Natural killer cell (primary cell): ENCODE measurements at regions of chr11 and their contacts with region 1.

Region 1: GRCh38 chr11:47523468-47524225 is 29.3 kb downstream of the CELF1 start:
- DNase-seq: peak in 1 of 2 donors; percentile 81
- ATAC-seq: peak; percentile 75 to 81 (median 79)
- H3K4me3 ChIP-seq: no peak overlapping the region
- H3K4me3 Mint-ChIP-seq: peak overlapping the region; percentile 1
- H3K27ac ChIP-seq: peak overlapping the region; percentile 42
- H3K27ac Mint-ChIP-seq: peak overlapping the region; percentile 89 to 93
- H3K4me1 ChIP-seq: peaks cover 26% of the 10 kb centered on the region
- H3K4me1 Mint-ChIP-seq: peaks cover 48 to 58% of the 10 kb centered on the region in 2 donors
- H3K27me3 ChIP-seq: no peaks in the 10 kb centered on the region
- H3K27me3 Mint-ChIP-seq: no peaks in the 10 kb centered on the region
- CTCF ChIP-seq: no peak

Region 2: DNA sequence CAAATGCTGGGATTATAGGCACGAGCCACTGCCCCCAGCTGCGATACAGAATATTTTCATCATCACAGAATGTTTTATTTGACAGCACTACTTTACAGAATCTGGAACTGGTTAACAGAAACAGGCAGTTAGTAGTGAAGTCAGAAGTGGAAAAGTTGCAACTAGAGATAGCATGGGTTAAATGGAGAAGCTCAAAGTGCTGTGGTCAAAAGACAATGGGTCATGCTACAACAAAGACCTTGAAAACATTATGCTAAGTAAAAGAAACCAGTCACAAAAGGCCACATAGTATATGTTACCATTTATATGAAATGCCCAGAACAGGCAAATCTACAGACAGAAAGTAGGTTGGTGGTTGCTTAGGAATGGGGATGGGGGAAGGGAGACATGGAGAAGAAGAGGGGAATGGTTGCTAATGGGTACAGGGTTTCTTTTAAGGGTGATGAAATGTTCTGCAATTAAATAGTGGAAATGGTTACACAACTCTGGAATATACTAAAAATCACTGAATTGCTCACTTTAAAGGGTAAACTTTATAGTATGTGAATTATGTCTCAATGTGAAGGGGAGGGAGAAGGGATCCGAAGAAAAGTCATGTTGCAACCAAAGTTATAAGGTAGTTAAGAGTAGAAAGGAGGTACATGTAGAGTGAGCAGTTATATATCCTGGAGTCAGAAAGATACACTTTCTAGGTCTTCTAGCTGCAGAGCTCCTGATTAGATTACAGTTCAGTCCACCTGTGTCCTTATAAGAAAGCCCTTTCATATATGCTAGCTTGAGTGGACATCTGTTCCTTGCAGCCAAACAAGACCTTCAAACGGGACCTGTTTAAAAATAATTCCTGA is 28.4 kb before region 1 on chr11:
- intact Hi-C with region 1: no loop called
- DNase-seq: no peak
- ATAC-seq: no peak
- H3K4me3 ChIP-seq: no peak overlapping the region
- H3K4me3 Mint-ChIP-seq: no peak overlapping the region
- H3K27ac ChIP-seq: no peak overlapping the region
- H3K27ac Mint-ChIP-seq: no peak overlapping the region
- H3K4me1 ChIP-seq: peaks cover 4% of the 10 kb centered on the region
- H3K4me1 Mint-ChIP-seq: peaks cover 35 to 36% of the 10 kb centered on the region in 2 donors
- H3K27me3 ChIP-seq: no peaks in the 10 kb centered on the region
- H3K27me3 Mint-ChIP-seq: no peaks in the 10 kb centered on the region
- CTCF ChIP-seq: no peak

Region 3: GRCh38 chr11:47578524-47579460 is 55.1 kb after region 1 on chr11 and contains the starts of genes KBTBD4 and NDUFS3:
- intact Hi-C with region 1: loop called (anchors 2 kb)
- DNase-seq: peak; percentile 88 to 96
- ATAC-seq: peak; percentile 95 to 98 (median 97)
- H3K4me3 ChIP-seq: peak within 1 kb of the TSS; percentile 69
- H3K4me3 Mint-ChIP-seq: peak within 1 kb of the TSS; percentile 97
- H3K27ac ChIP-seq: peak within 1 kb of the TSS; percentile 67
- H3K27ac Mint-ChIP-seq: peak within 1 kb of the TSS; percentile 91 to 99
- H3K4me1 ChIP-seq: peaks cover 22% of the 10 kb centered on the region
- H3K4me1 Mint-ChIP-seq: peaks cover 38 to 44% of the 10 kb centered on the region in 2 donors
- H3K27me3 ChIP-seq: no peaks in the 10 kb centered on the region
- H3K27me3 Mint-ChIP-seq: no peaks in the 10 kb centered on the region
- CTCF ChIP-seq: no peak
- total RNA-seq, gene KBTBD4: 17.7 to 24.1 (median 20.9) TPM
- total RNA-seq, gene NDUFS3: 114 to 138 (median 115) TPM